Panc1 (cell line): ENCODE measurements at regions of chr12 and their contacts with region 1.

Region 1: GRCh38 chr12:131818821-131819585 is 9.2 kb upstream of the MMP17 start:
- DNase-seq: no peak
- ATAC-seq: no peak
- H3K4me3 ChIP-seq: no peak overlapping the region
- H3K27ac ChIP-seq: no peak overlapping the region
- H3K4me1 ChIP-seq: no peaks in the 10 kb centered on the region
- H3K27me3 ChIP-seq: no peaks in the 10 kb centered on the region
- CTCF ChIP-seq: no peak

Region 2: GRCh38 chr12:130970165-130970907 is 848.7 kb before region 1 on chr12:
- CTCF ChIA-PET with region 1: no interaction called
- POLR2A ChIA-PET with region 1: no interaction called
- in situ Hi-C with region 1: no loop called
- intact Hi-C with region 1: no loop called
- DNase-seq: no peak
- ATAC-seq: no peak
- H3K4me3 ChIP-seq: no peak overlapping the region
- H3K27ac ChIP-seq: no peak overlapping the region
- H3K4me1 ChIP-seq: no peaks in the 10 kb centered on the region; the same call in 1 of the 2 replicates
- H3K27me3 ChIP-seq: peaks cover 12% of the 10 kb centered on the region
- CTCF ChIP-seq: no peak

Region 3: DNA sequence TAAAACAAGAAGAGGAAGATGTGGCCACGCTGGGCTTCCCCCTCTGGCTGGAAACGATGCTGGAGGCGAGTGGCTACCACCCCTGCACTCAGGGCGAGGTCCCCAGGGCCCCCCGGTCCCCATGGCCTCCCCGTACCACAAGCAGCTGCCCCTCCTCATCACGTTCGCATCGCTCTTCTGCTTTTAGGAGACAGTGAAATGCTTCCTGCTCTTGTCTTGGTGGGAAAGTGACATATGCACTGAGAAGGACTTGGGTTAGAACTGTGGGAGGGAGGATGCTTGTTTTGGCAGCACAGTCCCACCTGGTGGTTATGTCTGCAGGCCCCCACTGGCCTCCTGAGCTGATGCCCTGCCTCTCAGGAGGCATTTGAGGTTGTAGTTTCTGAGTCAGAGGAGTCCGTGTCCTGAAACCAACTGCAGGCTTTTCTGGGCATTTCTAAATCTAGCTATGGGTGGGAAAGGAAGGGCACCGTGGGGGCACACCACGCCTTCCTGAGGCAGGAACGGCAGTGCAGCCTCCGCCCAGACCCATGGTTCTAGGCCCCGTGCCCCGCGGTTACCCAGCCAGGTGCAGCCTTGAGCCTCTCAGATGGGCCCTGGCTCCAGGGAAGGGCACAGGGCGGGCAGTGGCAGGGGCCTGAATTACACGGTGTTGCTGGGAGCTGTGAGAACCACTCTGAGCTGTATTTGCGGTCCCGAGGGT is 726.0 kb before region 1 on chr12:
- CTCF ChIA-PET with region 1: no interaction called
- POLR2A ChIA-PET with region 1: no interaction called
- in situ Hi-C with region 1: no loop called
- intact Hi-C with region 1: loop called (anchors 10 kb)
- DNase-seq: no peak
- ATAC-seq: peak; percentile 44
- H3K4me3 ChIP-seq: no peak overlapping the region
- H3K27ac ChIP-seq: no peak overlapping the region
- H3K4me1 ChIP-seq: no peaks in the 10 kb centered on the region
- H3K27me3 ChIP-seq: no peaks in the 10 kb centered on the region; the same call in 1 of the 2 replicates
- CTCF ChIP-seq: no peak

Region 4: DNA sequence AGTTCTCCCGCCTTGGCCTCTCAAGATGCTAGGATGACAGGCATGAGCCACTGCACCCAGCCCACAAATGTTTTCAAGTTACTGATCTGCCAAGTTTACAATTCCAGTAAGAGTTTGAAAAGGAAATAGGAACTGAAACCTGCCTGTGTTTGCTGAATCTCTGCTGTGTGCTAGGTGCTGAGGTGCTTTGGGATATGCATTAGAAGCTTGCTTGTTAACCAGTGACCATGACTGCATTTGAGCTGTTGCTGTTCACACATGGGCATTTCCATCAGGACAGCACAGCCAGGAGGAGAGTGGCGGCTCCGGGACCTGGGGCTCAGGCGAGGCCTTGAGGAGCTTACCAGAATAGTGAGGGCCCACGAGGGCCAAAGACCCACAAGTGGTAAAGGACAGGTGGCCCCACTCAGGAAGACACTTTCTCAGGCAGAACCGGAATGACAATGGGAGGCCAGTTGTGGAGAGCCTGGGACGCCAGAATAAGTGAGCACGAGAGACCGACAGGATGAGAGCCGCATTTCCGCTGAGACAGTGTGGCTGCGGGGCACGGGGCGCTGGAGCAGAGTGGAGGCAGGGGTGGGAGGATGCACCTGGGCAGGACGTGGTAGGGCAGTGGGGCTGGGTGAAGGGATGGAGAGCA is 45.3 kb before region 1 on chr12:
- CTCF ChIA-PET with region 1: no interaction called
- POLR2A ChIA-PET with region 1: no interaction called
- in situ Hi-C with region 1: no loop called
- intact Hi-C with region 1: no loop called
- DNase-seq: no peak
- ATAC-seq: no peak
- H3K4me3 ChIP-seq: no peak overlapping the region
- H3K27ac ChIP-seq: no peak overlapping the region
- H3K4me1 ChIP-seq: no peaks in the 10 kb centered on the region; the same call in 1 of the 2 replicates
- H3K27me3 ChIP-seq: no peaks in the 10 kb centered on the region
- CTCF ChIP-seq: no peak

Region 5: GRCh38 chr12:131850856-131851559 is 32.0 kb after region 1 on chr12:
- CTCF ChIA-PET with region 1: no interaction called
- POLR2A ChIA-PET with region 1: no interaction called
- in situ Hi-C with region 1: no loop called
- intact Hi-C with region 1: no loop called
- DNase-seq: no peak
- ATAC-seq: no peak
- H3K4me3 ChIP-seq: no peak overlapping the region
- H3K27ac ChIP-seq: no peak overlapping the region
- H3K4me1 ChIP-seq: peaks cover 10% of the 10 kb centered on the region
- H3K27me3 ChIP-seq: no peaks in the 10 kb centered on the region
- CTCF ChIP-seq: no peak